Caco-2 (cell line): ENCODE measurements at regions of chr2 and their contacts with region 1.

Region 1: GRCh38 chr2:86808315-86809161 is 17.8 kb upstream of the CD8A start:
- DNase-seq: peak; percentile 94 to 97
- H3K4me3 ChIP-seq: peak overlapping the region; percentile 77
- H3K4me3 Mint-ChIP-seq: peak overlapping the region; percentile 77
- H3K27ac Mint-ChIP-seq: peak overlapping the region; percentile 28
- H3K4me1 ChIP-seq: no peaks in the 10 kb centered on the region
- H3K4me1 Mint-ChIP-seq: no peaks in the 10 kb centered on the region
- H3K27me3 ChIP-seq: no peaks in the 10 kb centered on the region
- H3K27me3 Mint-ChIP-seq: no peaks in the 10 kb centered on the region
- CTCF ChIP-seq: peak; percentile 93 to 96

Region 2: GRCh38 chr2:86453836-86454235 is 354.7 kb before region 1 on chr2:
- CTCF ChIA-PET with region 1: no interaction called
- POLR2A ChIA-PET with region 1: no interaction called
- intact Hi-C with region 1: no loop called
- DNase-seq: no peak
- H3K4me3 ChIP-seq: no peak overlapping the region
- H3K4me3 Mint-ChIP-seq: no peak overlapping the region
- H3K27ac Mint-ChIP-seq: no peak overlapping the region
- H3K4me1 ChIP-seq: no peaks in the 10 kb centered on the region
- H3K4me1 Mint-ChIP-seq: no peaks in the 10 kb centered on the region
- H3K27me3 ChIP-seq: no peaks in the 10 kb centered on the region
- H3K27me3 Mint-ChIP-seq: no peaks in the 10 kb centered on the region
- CTCF ChIP-seq: no peak

Region 3: DNA sequence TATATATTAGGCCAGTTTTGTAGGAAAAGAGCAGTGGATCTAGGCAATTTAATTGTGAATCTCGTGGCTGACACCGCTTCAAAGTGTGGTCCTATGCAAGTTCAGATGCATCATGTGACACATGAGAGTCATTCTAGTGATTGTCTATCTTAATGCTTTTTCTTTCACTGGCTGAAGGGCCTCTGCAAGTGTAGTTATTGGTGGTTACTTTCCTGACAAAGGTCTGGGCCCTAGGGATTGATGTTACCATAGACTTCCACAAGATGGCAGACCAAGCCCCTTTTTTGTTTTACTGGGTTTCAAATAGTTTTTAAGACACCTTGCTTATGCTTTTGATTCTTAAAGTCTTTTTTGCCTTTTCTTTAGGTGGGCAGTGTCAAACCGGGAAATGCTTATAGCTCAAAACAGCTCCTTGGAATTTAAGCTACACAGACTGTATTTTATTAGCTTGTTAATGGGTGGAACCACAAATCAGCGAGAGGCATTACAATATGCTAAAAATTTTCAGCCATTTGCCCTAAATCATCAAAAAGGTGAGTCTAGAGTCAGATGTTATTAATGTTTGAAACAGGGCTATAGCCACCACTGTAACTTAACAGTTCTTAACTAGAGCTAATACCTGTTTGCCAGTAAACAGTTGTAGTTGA is 43.8 kb before region 1 on chr2:
- CTCF ChIA-PET with region 1: no interaction called
- POLR2A ChIA-PET with region 1: no interaction called
- intact Hi-C with region 1: loop called (anchors 1 kb)
- DNase-seq: peak in 1 of 2 experiments; percentile 68
- H3K4me3 ChIP-seq: no peak overlapping the region
- H3K4me3 Mint-ChIP-seq: no peak overlapping the region
- H3K27ac Mint-ChIP-seq: no peak overlapping the region
- H3K4me1 ChIP-seq: no peaks in the 10 kb centered on the region
- H3K4me1 Mint-ChIP-seq: no peaks in the 10 kb centered on the region
- H3K27me3 ChIP-seq: no peaks in the 10 kb centered on the region
- H3K27me3 Mint-ChIP-seq: no peaks in the 10 kb centered on the region
- CTCF ChIP-seq: peak; percentile 69 to 86

Region 4: DNA sequence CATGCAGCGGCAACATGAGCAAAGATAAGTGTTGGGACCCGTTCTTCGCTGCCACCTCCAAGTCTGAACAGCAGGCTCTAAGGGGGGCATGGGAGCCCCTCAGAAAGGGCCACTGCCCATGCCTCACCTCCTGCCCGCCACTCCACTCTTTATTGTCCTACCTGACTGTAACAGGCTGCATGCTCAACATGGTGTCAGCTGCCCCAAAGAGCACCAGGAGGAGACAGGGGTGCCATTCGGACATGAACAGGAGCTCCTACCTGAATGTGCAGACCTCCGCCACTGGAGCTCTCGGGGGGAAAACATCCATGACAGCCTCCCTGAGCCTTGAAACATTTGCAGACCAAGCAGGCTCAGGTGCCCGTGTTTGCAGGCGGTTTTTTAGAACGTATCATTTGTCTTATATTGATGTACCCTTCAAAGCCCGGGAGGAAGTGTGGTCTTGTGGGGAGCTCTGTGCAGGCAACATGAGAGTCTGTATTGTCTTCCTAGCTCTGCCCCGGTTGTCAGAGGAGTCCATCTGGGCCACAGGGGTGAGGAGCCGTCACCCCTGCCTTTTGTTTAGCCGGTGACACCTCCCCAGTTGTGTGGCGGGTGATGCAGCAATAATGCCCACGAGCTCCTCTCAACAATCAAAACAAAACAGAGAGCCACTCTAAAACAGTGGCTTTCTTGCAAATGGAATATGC is 17.3 kb after region 1 on chr2:
- CTCF ChIA-PET with region 1: no interaction called
- POLR2A ChIA-PET with region 1: interaction called, 4 read pairs
- intact Hi-C with region 1: loop called (anchors 2 kb)
- DNase-seq: no peak
- H3K4me3 ChIP-seq: no peak overlapping the region
- H3K4me3 Mint-ChIP-seq: no peak overlapping the region
- H3K27ac Mint-ChIP-seq: no peak overlapping the region
- H3K4me1 ChIP-seq: no peaks in the 10 kb centered on the region
- H3K4me1 Mint-ChIP-seq: peaks cover 14% of the 10 kb centered on the region
- H3K27me3 ChIP-seq: no peaks in the 10 kb centered on the region
- H3K27me3 Mint-ChIP-seq: no peaks in the 10 kb centered on the region
- CTCF ChIP-seq: no peak